ENCODE measurements at regions of chr11 and their contacts with region 1.

Region 1: GRCh38 chr11:695538-696248 is at the start of gene TMEM80:
- DNase-seq: peak in 9 of 10 donors; percentile 90 to 99 (median 97)
- ATAC-seq: peak; percentile 63 to 67
- H3K4me3 Mint-ChIP-seq: peak within 1 kb of the TSS; percentile 83 to 93 (median 86)
- H3K27ac Mint-ChIP-seq: peak within 1 kb of the TSS; percentile 89 to 98 (median 95)
- H3K4me1 Mint-ChIP-seq: peaks cover 30 to 61% (median 50%) of the 10 kb centered on the region in 4 donors
- H3K27me3 Mint-ChIP-seq: no peaks in the 10 kb centered on the region
- polyA plus RNA-seq, gene TMEM80: 22.2 to 44.6 (median 32.4) TPM

Region 2: GRCh38 chr11:615504-616319 is 80.0 kb before region 1 on chr11 and contains the start of gene IRF7:
- POLR2A ChIA-PET with region 1: interaction called, 19 read pairs
- DNase-seq: peak; percentile 67 to 92 (median 80)
- ATAC-seq: peak; percentile 77 to 82
- H3K4me3 Mint-ChIP-seq: peak within 1 kb of the TSS; percentile 86 to 96 (median 91)
- H3K27ac Mint-ChIP-seq: peak within 1 kb of the TSS; percentile 74 to 96 (median 94)
- H3K4me1 Mint-ChIP-seq: peaks cover 7 to 23% (median 19%) of the 10 kb centered on the region in 4 donors
- H3K27me3 Mint-ChIP-seq: no peaks in the 10 kb centered on the region
- polyA plus RNA-seq, gene IRF7: 19.8 to 38.6 (median 25.3) TPM

Region 3: GRCh38 chr11:705646-706438 is 10.1 kb after region 1 on chr11 and contains the start of gene EPS8L2:
- POLR2A ChIA-PET with region 1: interaction called, 18 read pairs
- DNase-seq: no peak
- ATAC-seq: peak; percentile 71 to 77
- H3K4me3 Mint-ChIP-seq: peak within 1 kb of the TSS in 8 of 10 donors; percentile 18 to 77 (median 36)
- H3K27ac Mint-ChIP-seq: peak within 1 kb of the TSS in 2 of 10 donors; percentile 53 to 72
- H3K4me1 Mint-ChIP-seq: peaks cover 3 to 15% (median 7%) of the 10 kb centered on the region in 4 donors
- H3K27me3 Mint-ChIP-seq: peaks cover 1 to 25% (median 11%) of the 10 kb centered on the region in 5 donors
- polyA plus RNA-seq, gene EPS8L2: 9.6 to 20.4 (median 14.8) TPM

Region 4: GRCh38 chr11:727859-728748 is 32.4 kb after region 1 on chr11:
- POLR2A ChIA-PET with region 1: interaction called, 109 read pairs
- DNase-seq: peak; percentile 66 to 85 (median 79)
- ATAC-seq: peak; percentile 67 to 82
- H3K4me3 Mint-ChIP-seq: no peak overlapping the region
- H3K27ac Mint-ChIP-seq: no peak overlapping the region
- H3K4me1 Mint-ChIP-seq: peaks cover 4 to 15% (median 12%) of the 10 kb centered on the region in 4 donors
- H3K27me3 Mint-ChIP-seq: peaks cover 2 to 5% (median 4%) of the 10 kb centered on the region in 5 donors

Measured in naive thymus-derived CD8-positive, alpha-beta T cell (primary cell).